ENCODE measurements at regions of chr9 and their contacts with region 1.

Region 1: GRCh38 chr9:121779381-121780117 is 128.1 kb downstream of the DAB2IP start:
- DNase-seq: no peak
- ATAC-seq: no peak
- H3K4me3 ChIP-seq: no peak overlapping the region
- H3K27ac ChIP-seq: no peak overlapping the region
- H3K4me1 ChIP-seq: no peaks in the 10 kb centered on the region
- H3K27me3 ChIP-seq: no peaks in the 10 kb centered on the region

Region 2: DNA sequence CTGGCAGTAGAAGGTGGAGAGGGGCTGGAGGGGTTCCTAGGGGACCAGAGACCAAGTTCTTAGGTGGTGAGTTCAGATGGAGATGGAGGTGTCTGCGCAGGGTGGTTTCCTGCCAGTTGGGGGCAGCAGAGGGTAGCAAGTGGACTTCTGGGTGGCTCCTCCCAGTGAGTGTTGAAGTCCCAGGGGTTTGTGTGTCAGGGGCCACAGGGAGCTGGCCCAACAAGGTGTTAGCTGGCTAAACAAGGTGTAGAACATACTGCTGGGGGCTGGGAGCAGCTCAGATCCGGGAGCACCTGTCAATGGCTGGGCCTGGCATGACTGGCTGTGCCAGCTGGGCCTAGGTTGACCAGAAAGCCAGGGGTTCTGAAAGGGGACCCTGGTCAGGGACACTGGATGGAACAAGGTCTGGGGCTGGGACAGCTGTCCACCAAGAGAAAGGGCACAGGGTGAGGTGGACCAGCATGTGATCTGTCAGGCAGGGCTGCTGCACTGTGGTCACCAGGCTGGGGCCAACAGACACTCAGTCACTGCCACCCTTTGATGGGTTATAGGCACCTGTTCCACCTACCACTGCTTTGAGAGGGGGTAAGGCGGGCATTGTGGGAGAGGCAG is 92.5 kb before region 1 on chr9:
- intact Hi-C with region 1: no loop called
- DNase-seq: peak; percentile 78 to 94
- ATAC-seq: peak; percentile 65
- H3K4me3 ChIP-seq: no peak overlapping the region
- H3K27ac ChIP-seq: no peak overlapping the region
- H3K4me1 ChIP-seq: no peaks in the 10 kb centered on the region
- H3K27me3 ChIP-seq: no peaks in the 10 kb centered on the region

Region 3: GRCh38 chr9:121861501-121862180 is 82.1 kb after region 1 on chr9:
- intact Hi-C with region 1: loop called in 1 of 2 experiments (anchors 5 kb)
- DNase-seq: peak in 1 of 2 donors; percentile 57
- ATAC-seq: peak; percentile 53
- H3K4me3 ChIP-seq: no peak overlapping the region
- H3K27ac ChIP-seq: peak overlapping the region in 1 of 2 donors; percentile 14
- H3K4me1 ChIP-seq: no peaks in the 10 kb centered on the region
- H3K27me3 ChIP-seq: no peaks in the 10 kb centered on the region